Activated T-helper 1 cell treated with anti-CD3 and anti-CD28 coated beads, Interleukin-12 subunit alpha, Interleukin-12 subunit beta, Interleukin-2, Interleukin-4 antibody, amounts not matched to agents 30 ng/mL and 10 ng/mL and 1 ng/mL, durations not matched to agents 14 hours and 24 hours and 36 hours (primary cell): ENCODE measurements at regions of chr5 and their contacts with region 1.

Region 1: GRCh38 chr5:82641331-82642003 is 363.3 kb upstream of the RPS23 start:
- DNase-seq: peak; percentile 14
- H3K4me3 Mint-ChIP-seq: no peak overlapping the region
- H3K27ac Mint-ChIP-seq: no peak overlapping the region
- H3K4me1 Mint-ChIP-seq: peaks cover 19% of the 10 kb centered on the region
- H3K27me3 Mint-ChIP-seq: no peaks in the 10 kb centered on the region

Region 2: DNA sequence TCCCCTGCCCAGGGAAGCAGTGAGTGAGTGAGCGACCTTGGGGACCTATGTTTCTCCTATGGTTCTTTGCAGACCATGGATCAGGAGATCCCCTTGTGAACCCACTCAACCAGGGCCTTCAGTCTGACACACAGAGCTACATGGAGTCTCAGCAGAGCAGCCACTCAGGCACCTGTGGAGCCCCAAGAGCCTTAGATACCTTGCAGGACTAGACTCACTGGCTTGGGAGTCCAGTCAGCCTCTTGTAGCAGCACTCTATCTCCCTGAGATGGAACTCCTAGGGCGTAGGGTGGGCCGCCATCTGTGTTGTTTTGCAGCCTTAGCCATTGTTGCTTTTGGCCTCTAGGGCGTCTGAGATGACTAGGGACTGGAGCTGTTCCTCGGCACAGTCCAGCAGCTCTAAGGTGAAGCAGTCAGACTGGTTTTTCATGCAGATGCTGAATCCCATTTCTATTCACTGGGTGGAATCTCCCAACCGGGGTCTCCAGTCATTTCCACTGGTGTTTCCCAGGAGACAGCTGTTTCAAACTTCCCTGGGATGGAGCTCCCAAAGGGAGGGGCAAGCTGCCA is 78.7 kb before region 1 on chr5:
- intact Hi-C with region 1: no loop called
- DNase-seq: no peak
- H3K4me3 Mint-ChIP-seq: no peak overlapping the region
- H3K27ac Mint-ChIP-seq: no peak overlapping the region
- H3K4me1 Mint-ChIP-seq: no peaks in the 10 kb centered on the region
- H3K27me3 Mint-ChIP-seq: peaks cover 7% of the 10 kb centered on the region

Region 3: DNA sequence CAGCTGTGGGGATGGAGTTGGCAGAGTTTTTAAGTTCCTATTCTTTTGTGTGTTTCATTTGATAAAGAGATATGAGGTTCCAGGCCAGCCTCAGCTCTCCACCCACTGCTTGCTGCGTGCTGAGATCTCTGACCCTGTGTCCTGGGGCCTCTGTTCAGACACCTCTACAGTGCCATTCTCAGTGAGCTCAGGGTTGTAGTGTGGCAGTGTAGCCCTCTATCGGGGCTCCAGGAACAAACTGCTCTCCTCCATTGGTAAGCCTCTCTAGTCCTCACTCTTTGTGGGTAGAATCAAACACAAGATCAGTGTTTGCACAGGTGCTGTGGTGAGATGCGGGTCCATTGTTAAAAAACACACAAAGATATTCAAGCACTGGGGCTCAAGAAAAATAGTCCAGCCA is 23.3 kb after region 1 on chr5:
- intact Hi-C with region 1: no loop called
- DNase-seq: no peak
- H3K4me3 Mint-ChIP-seq: no peak overlapping the region
- H3K27ac Mint-ChIP-seq: no peak overlapping the region
- H3K4me1 Mint-ChIP-seq: peaks cover 10% of the 10 kb centered on the region
- H3K27me3 Mint-ChIP-seq: peaks cover 2% of the 10 kb centered on the region

Region 4: DNA sequence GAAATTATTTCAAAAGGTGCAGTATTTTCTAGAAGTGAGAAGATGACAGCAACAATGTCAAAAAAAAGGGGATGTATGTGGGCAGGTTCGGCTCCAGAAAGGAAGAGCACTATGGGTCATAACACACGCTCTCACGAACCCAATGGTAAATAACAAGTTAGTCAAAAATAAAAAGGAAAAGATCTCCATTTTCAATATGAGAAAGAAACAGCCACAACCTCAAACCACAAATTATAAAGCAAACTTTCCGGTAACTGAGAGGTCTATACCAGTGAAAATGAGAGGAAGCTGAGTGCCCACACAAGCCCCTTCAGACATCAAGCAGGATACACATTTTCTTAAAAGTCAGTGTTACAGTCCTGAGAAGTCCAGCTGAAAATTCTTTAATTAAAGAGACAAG is 35.2 kb after region 1 on chr5:
- intact Hi-C with region 1: loop called (anchors 2 kb)
- DNase-seq: peak; percentile 27
- H3K4me3 Mint-ChIP-seq: peak overlapping the region; percentile 63
- H3K27ac Mint-ChIP-seq: peak overlapping the region; percentile 94
- H3K4me1 Mint-ChIP-seq: peaks cover 44% of the 10 kb centered on the region
- H3K27me3 Mint-ChIP-seq: no peaks in the 10 kb centered on the region

Region 5: DNA sequence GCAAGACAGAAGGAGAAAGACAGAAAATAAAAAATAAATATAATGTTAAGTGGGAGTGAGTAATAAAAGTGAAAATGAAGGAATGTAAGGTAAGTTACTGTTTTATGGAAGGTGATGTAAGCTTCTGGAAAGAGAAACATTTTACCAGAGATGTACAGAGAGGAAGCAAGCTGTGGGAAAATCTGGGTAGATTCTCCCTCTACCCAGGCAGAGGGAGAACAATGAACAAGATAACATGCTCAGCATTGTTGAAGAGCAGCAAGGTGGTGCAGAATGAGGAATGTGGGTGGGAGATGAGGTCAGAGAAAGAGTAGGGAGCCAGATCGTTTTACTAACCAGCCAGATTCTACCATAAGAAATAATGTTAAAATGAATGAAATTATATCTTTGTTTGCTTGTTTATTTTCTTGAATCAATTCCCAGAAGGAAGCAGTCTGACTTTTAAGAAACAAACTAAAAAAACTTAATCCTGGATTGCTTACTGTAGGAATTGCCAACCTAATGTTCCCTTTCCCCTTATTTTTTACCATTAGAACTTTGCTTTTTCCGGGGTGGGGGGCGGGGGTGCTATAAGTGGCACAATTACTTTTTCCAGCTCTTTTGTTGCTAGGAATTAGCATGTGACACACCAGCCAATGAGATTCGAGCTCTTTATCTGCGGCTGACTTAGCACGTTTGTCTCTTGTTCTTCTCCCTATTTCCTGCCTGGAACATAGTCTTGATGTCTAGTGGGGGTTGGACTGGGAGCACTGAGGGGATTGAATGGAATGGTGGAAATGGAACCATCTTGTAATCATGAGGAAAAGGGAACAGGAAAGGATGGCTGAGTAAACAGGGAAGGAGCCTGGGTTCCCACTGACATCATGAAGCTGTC is 79.0 kb after region 1 on chr5:
- intact Hi-C with region 1: no loop called
- DNase-seq: no peak
- H3K4me3 Mint-ChIP-seq: no peak overlapping the region
- H3K27ac Mint-ChIP-seq: no peak overlapping the region
- H3K4me1 Mint-ChIP-seq: peaks cover 6% of the 10 kb centered on the region
- H3K27me3 Mint-ChIP-seq: peaks cover 4% of the 10 kb centered on the region

Region 6: DNA sequence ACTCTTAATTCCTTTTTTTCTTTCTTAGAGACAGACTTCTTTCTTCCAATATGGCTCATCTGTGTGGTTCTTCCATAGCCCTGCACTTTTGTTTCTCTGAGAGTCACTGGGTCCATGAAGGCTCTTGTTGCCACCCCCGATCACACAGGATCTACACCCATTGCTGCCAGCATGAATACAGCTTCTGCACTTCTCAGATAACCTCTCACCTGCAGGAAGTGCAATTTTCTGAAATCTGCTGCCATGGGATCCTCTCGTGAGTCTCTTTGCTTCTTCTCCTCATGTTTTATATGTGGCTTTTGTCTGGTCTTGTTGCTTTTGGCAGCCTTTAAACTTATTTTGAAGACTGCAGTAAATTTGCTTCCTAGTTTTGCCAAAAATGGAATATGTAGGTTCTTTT is 264.5 kb after region 1 on chr5:
- intact Hi-C with region 1: loop called (anchors 10 kb)
- DNase-seq: no peak
- H3K4me3 Mint-ChIP-seq: no peak overlapping the region
- H3K27ac Mint-ChIP-seq: no peak overlapping the region
- H3K4me1 Mint-ChIP-seq: no peaks in the 10 kb centered on the region
- H3K27me3 Mint-ChIP-seq: peaks cover 2% of the 10 kb centered on the region

Region 7: GRCh38 chr5:83430130-83431010 is 788.9 kb after region 1 on chr5:
- intact Hi-C with region 1: loop called (anchors 1 kb)
- DNase-seq: peak; percentile 38
- H3K4me3 Mint-ChIP-seq: no peak overlapping the region
- H3K27ac Mint-ChIP-seq: no peak overlapping the region
- H3K4me1 Mint-ChIP-seq: no peaks in the 10 kb centered on the region
- H3K27me3 Mint-ChIP-seq: peaks cover 2% of the 10 kb centered on the region

Region 8: DNA sequence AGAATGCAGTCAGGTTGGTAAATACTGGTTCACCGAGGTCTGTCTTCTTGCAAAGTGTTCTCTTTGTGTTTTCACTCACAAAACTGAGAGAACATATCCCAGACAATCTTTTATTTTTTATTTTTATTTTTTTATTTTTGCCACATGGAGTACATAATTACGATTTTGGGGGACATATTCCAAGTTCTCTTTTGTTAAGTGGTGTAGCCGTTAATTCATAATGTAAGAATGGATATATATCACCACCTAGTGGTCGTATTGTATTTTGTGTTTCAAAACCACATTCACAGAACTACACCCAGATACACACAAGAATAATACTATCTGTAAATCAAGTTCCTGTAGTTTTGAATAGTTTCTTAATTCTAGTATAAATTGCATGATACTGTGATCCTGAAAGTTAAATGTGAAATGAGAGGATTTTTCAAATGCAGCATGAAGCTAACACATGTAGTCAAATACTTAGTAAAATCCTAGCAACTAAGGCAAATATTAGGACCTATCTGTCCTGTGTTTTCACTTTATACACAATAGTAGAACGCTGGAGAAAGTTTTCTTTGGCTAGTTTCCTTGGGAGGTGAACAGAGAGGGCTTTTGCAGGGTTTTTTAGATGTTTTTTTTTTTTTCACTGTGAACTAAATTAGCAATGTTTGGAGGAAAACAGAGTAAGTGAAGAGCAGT is 922.7 kb after region 1 on chr5:
- intact Hi-C with region 1: loop called (anchors 1 kb)
- DNase-seq: no peak
- H3K4me3 Mint-ChIP-seq: no peak overlapping the region
- H3K27ac Mint-ChIP-seq: no peak overlapping the region
- H3K4me1 Mint-ChIP-seq: no peaks in the 10 kb centered on the region
- H3K27me3 Mint-ChIP-seq: peaks cover 20% of the 10 kb centered on the region